Sigmoid colon (tissue), 7 donors: ENCODE measurements at regions of chr14 and their contacts with region 1.

Region 1: DNA sequence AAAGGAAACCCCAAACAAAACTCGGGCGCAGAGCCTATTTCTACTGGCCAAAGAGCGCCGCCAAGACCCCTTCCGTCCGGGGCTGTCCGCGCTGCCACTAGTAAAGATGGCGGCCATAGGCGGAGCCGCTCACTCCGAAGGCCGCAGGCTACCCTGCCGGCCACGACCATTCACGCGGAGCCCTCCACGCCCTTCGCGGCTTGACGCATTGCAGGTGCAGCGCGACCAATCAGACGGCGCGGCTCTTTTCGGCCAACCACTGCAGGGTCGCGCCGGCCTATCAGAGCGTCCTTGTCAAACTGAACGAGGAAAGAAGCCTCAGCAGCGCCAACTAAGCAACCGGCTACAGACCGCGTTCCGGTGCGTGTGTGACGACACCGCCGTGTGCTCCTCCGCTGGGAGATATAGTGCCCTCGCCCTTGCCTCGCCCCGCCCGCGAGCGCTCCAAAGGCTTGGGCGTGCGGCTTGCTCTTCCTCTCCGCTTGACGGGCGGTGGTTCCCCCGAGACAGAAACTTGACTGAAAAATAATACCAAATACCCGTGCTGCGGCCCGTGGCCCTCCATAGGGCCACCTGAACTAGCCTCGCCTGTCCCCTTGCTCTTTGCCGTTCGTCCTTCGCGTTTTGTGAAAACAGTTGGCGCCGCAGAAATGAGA is 13.6 kb upstream of the CALM1 start:
- DNase-seq: peak; percentile 100
- H3K4me3 ChIP-seq: peak overlapping the region; percentile 59 to 70 (median 64)
- H3K27ac ChIP-seq: peak overlapping the region; percentile 93 to 99 (median 97)
- H3K4me1 ChIP-seq: peaks cover 0 to 35% (median 33%) of the 10 kb centered on the region in 4 donors
- H3K27me3 ChIP-seq: no peaks in the 10 kb centered on the region
- CTCF ChIP-seq: no peak
- EP300 ChIP-seq: peak in 1 of 4 donors; percentile 21
- POLR2A ChIP-seq: peak; percentile 98

Region 2: GRCh38 chr14:90301668-90302090 is 81.5 kb before region 1 on chr14:
- intact Hi-C with region 1: loop called (anchors 5 kb)
- DNase-seq: no peak
- H3K4me3 ChIP-seq: no peak overlapping the region
- H3K27ac ChIP-seq: peak overlapping the region; percentile 61 to 75 (median 72)
- H3K4me1 ChIP-seq: peaks cover 0 to 17% (median 16%) of the 10 kb centered on the region in 4 donors
- H3K27me3 ChIP-seq: no peaks in the 10 kb centered on the region
- CTCF ChIP-seq: peak; percentile 34 to 66 (median 46)
- EP300 ChIP-seq: no peak
- POLR2A ChIP-seq: no peak

Region 3: DNA sequence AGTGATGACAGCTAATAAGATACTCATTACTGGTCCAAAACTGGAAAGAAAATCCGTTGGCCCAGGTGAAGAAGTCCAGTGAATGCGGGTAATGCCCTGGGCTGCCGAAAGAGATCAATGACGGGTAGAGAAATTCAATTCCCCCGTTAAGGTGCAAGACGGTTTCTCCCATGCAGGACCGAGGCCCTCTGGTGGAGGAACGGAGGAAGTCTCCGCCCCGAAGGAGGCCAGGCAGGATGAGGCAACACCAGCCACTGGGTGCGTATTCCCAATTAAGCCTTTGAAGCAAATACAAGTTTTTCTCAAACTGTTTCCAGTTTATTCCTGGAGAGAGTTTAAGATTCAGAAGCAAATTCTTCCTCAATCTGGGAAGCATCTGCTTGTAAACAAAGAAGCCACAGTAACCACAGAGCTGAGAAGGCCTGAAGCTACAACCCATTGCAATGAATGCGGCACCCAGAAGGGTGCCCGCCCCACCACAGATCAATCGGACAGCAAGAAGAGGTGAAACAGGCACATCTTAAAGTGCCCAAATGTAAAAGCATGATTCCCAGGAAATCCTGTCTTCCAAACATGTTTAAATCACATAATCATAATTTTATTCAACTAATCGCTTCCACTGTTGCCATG is 314.5 kb after region 1 on chr14:
- intact Hi-C with region 1: loop called (anchors 5 kb)
- DNase-seq: peak; percentile 95
- H3K4me3 ChIP-seq: no peak overlapping the region
- H3K27ac ChIP-seq: peak overlapping the region; percentile 76 to 86 (median 82)
- H3K4me1 ChIP-seq: peaks cover 0 to 39% (median 34%) of the 10 kb centered on the region in 4 donors
- H3K27me3 ChIP-seq: no peaks in the 10 kb centered on the region
- CTCF ChIP-seq: peak; percentile 86 to 97 (median 96)
- EP300 ChIP-seq: no peak
- POLR2A ChIP-seq: no peak

Region 4: GRCh38 chr14:90815822-90816700 is 432.9 kb after region 1 on chr14 and contains the start of gene TTC7B:
- intact Hi-C with region 1: loop called (anchors 5 kb)
- DNase-seq: peak; percentile 73
- H3K4me3 ChIP-seq: peak within 1 kb of the TSS; percentile 76 to 84 (median 80)
- H3K27ac ChIP-seq: peak within 1 kb of the TSS in 3 of 4 donors; percentile 55 to 66 (median 64)
- H3K4me1 ChIP-seq: peaks cover 0 to 20% (median 17%) of the 10 kb centered on the region in 4 donors
- H3K27me3 ChIP-seq: no peaks in the 10 kb centered on the region
- CTCF ChIP-seq: no peak
- EP300 ChIP-seq: no peak
- POLR2A ChIP-seq: no peak
- total RNA-seq, gene TTC7B: 46.8 to 70.9 (median 61.2) TPM